ENCODE measurements at regions of chr11 and their contacts with region 1.

Region 1: GRCh38 chr11:90930252-90930651 is 707.4 kb upstream of the CHORDC1 start:
- DNase-seq: no peak
- H3K4me3 ChIP-seq: no peak overlapping the region
- H3K27ac ChIP-seq: no peak overlapping the region
- H3K4me1 ChIP-seq: no peaks in the 10 kb centered on the region
- H3K27me3 ChIP-seq: no peaks in the 10 kb centered on the region
- CTCF ChIP-seq: peak; percentile 22 to 43

Region 2: DNA sequence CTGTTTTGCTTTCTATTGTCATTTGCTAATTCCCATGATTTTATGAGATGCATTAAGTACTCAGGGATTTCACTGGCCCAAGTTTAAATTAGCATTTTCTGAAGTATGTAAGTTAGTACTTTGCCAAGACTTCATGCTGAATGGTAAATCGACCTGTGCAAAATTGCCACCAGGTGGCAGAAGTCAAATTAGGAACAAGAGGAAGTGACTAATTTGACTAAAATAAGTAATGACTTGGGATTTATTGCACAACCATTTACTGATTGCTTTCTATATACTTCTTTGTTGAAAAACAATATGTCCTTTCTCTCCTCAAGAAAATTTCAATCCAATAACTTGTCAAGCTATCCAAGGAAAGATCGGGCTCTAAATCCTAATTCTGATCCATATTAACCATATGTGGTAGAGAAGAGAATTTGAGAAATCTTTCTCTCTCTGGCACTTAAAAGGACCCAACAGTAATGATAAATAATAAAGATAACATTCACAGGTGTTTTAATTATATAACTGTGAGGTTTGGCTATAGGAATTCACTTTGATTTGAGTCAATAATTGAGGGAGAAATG is 453.7 kb before region 1 on chr11:
- CTCF ChIA-PET with region 1: no interaction called
- dilution Hi-C with region 1: no loop called
- in situ Hi-C with region 1: no loop called
- intact Hi-C with region 1: loop called (anchors 5 kb)
- DNase-seq: peak; percentile 68
- H3K4me3 ChIP-seq: no peak overlapping the region
- H3K27ac ChIP-seq: no peak overlapping the region
- H3K4me1 ChIP-seq: peaks cover 6% of the 10 kb centered on the region
- H3K27me3 ChIP-seq: no peaks in the 10 kb centered on the region
- CTCF ChIP-seq: peak; percentile 69 to 73

Region 3: DNA sequence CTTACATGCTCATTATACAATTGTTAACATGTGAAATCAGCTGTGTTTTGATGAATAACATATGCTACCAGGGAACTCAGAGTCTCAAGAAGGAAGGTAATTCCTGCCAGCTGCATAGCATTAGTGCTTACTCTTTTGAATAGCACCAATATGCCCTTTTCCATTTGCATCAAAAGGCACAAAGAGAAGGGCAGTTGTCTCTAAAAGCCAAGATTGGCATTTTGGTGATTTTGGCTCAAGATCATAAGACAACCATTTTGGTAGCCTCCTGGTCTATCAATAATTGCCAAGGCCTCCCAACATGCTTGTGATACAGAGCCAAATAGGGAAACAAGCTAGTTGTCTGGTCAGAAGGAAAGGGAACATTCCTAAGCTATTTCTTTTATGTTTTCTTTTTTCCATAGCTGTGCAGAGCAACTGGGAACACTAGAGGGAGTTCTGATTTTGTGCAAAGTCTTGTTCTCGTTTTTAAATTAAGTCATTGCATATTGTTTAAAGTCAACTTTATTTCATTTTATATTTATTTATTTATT is 290.7 kb before region 1 on chr11:
- CTCF ChIA-PET with region 1: interaction called, 4 read pairs
- dilution Hi-C with region 1: no loop called
- in situ Hi-C with region 1: no loop called
- intact Hi-C with region 1: loop called (anchors 1 kb)
- DNase-seq: peak; percentile 6
- H3K4me3 ChIP-seq: no peak overlapping the region
- H3K27ac ChIP-seq: no peak overlapping the region
- H3K4me1 ChIP-seq: no peaks in the 10 kb centered on the region
- H3K27me3 ChIP-seq: no peaks in the 10 kb centered on the region
- CTCF ChIP-seq: peak; percentile 63 to 75

Region 4: GRCh38 chr11:90836031-90836430 is 94.2 kb before region 1 on chr11:
- CTCF ChIA-PET with region 1: no interaction called
- dilution Hi-C with region 1: no loop called
- in situ Hi-C with region 1: no loop called
- intact Hi-C with region 1: no loop called
- DNase-seq: no peak
- H3K4me3 ChIP-seq: no peak overlapping the region
- H3K27ac ChIP-seq: no peak overlapping the region
- H3K4me1 ChIP-seq: peaks cover 3% of the 10 kb centered on the region
- H3K27me3 ChIP-seq: no peaks in the 10 kb centered on the region
- CTCF ChIP-seq: no peak

Region 5: DNA sequence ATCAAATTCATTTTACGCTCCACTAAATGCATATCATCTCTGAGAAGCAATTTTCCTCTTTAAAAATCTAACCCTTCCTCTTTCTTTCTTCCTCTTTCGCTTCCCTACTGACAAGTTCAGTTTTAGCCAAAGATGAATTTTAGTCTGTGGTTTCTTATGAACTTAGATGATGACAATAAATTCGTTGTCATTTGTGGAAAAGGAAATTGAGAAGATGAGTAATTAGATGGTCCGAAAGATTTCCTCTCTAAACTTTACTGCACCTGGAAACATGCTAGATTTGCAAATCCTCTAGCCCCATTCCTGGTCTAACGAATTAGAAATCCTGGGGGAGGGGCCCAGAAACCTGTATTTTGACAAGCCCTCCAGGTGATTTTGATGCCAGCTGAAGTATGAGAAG is 148.0 kb after region 1 on chr11:
- CTCF ChIA-PET with region 1: no interaction called
- dilution Hi-C with region 1: no loop called
- in situ Hi-C with region 1: no loop called
- intact Hi-C with region 1: no loop called
- DNase-seq: no peak
- H3K4me3 ChIP-seq: no peak overlapping the region
- H3K27ac ChIP-seq: no peak overlapping the region
- H3K4me1 ChIP-seq: no peaks in the 10 kb centered on the region
- H3K27me3 ChIP-seq: no peaks in the 10 kb centered on the region
- CTCF ChIP-seq: no peak